ENCODE measurements at regions of chr18 and their contacts with region 1.

Region 1: DNA sequence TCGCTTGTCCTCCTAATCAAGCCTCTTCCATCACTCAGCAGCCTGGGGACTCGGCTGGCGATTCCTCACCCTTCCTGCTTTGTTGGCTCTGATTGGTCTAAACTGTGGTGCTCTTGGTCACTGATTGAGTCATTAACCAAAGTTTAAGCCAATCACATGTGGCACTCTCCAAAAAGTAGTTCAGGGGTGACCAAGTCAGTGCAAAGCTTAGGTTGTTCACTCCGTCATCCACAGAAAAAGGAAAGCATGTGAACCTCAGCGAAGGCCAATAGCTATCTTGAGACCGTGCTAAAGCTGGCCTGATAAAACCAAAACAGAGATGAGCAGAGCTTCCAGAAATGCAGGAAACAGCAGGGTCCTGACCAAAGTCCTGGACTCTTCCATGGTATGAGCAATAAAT is 4.9 kb downstream of the ALPK2 start:
- DNase-seq: no peak
- ATAC-seq: peak; percentile 40

Region 2: DNA sequence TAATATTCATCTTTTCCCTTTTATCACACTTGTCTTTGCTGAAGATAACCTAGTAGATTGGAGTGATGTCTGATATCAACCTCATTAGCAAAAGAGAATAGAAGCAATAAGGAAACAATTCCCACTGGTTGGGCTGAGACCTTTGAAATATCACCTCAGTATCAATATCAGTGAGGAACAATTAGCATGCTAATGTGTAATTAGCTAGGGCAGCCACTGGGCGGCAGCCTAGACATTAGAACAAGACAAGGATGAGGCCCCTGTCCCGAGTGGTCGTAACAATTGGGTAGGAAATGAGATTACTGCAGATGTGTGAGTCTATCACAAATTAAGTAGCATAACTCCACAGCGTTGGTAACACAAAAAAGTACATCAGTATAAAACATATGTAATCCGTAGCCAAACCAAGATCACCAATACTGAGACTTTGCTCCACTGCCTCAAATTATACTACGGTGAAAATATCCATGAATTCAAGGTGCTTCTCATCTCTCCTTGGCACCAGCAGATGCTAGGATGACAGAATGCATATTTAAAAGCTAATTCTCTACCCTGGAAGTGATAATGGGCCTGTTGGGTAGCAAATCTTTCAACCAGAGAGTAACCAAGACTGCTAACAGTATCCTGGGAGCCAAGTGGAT is 94.2 kb before region 1 on chr18:
- intact Hi-C with region 1: loop called (anchors 10 kb)
- DNase-seq: peak; percentile 87
- ATAC-seq: peak; percentile 48

Region 3: GRCh38 chr18:58556331-58557007 is 67.5 kb before region 1 on chr18:
- intact Hi-C with region 1: loop called (anchors 5 kb)
- DNase-seq: peak; percentile 74
- ATAC-seq: peak; percentile 93

Region 4: GRCh38 chr18:58599106-58599505 is 24.9 kb before region 1 on chr18:
- intact Hi-C with region 1: loop called (anchors 2 kb)
- DNase-seq: no peak
- ATAC-seq: no peak

Region 5: GRCh38 chr18:58671111-58671631 is 47.2 kb after region 1 on chr18 and contains the start of gene MALT1:
- intact Hi-C with region 1: loop called (anchors 5 kb)
- DNase-seq: peak; percentile 96
- ATAC-seq: peak; percentile 99
- total RNA-seq, gene MALT1: 11.8 TPM

Region 6: GRCh38 chr18:58761241-58761969 is 137.4 kb after region 1 on chr18:
- intact Hi-C with region 1: loop called (anchors 5 kb)
- DNase-seq: no peak
- ATAC-seq: peak; percentile 64

Region 7: DNA sequence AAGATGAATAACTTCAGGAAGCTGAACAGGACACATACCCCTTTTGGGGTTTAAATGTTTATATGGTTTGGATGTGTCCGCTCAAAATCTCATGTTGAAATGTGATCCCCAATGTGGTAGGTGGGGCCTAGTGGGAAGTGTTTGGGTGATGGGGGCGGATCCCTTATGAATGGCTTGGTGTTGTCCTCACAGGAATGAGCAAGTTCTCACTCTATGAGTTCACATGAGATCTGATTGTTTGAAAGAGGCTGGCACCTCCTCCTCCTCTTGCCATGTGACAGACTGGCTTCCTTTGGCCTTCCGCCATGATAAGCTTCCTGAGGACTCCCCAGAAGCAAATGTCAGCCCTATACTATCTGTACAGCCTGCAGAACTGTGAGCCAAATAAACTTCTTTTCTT is 152.1 kb after region 1 on chr18:
- intact Hi-C with region 1: no loop called
- DNase-seq: no peak
- ATAC-seq: no peak

Measured in Right ventricle myocardium inferior (tissue), 1 donor.